Activated CD4-positive, alpha-beta memory T cell treated with anti-CD3 and anti-CD28 coated beads for 36 hours (primary cell): ENCODE measurements at regions of chr16 and their contacts with region 1.

Region 1: GRCh38 chr16:25014500-25015147 is 545 bp downstream of the ARHGAP17 start:
- DNase-seq: peak; percentile 37
- H3K4me3 Mint-ChIP-seq: peak overlapping the region; percentile 95
- H3K27ac Mint-ChIP-seq: peak overlapping the region; percentile 90
- H3K4me1 Mint-ChIP-seq: peaks cover 73% of the 10 kb centered on the region
- H3K27me3 Mint-ChIP-seq: no peaks in the 10 kb centered on the region

Region 2: GRCh38 chr16:24668481-24669061 is 346.1 kb before region 1 on chr16:
- CTCF ChIA-PET with region 1: no interaction called
- POLR2A ChIA-PET with region 1: no interaction called
- intact Hi-C with region 1: loop called (anchors 10 kb)
- DNase-seq: peak; percentile 78
- H3K4me3 Mint-ChIP-seq: peak overlapping the region; percentile 64
- H3K27ac Mint-ChIP-seq: peak overlapping the region; percentile 90
- H3K4me1 Mint-ChIP-seq: peaks cover 51% of the 10 kb centered on the region
- H3K27me3 Mint-ChIP-seq: peaks cover 8% of the 10 kb centered on the region

Region 3: GRCh38 chr16:24729362-24729984 is 285.2 kb before region 1 on chr16 and contains the start of gene TNRC6A:
- CTCF ChIA-PET with region 1: no interaction called
- POLR2A ChIA-PET with region 1: no interaction called
- intact Hi-C with region 1: loop called (anchors 10 kb)
- DNase-seq: peak; percentile 88
- H3K4me3 Mint-ChIP-seq: peak within 1 kb of the TSS; percentile 98
- H3K27ac Mint-ChIP-seq: peak within 1 kb of the TSS; percentile 98
- H3K4me1 Mint-ChIP-seq: peaks cover 49% of the 10 kb centered on the region
- H3K27me3 Mint-ChIP-seq: no peaks in the 10 kb centered on the region
- total RNA-seq, gene TNRC6A: 31.7 to 36.3 TPM

Region 4: DNA sequence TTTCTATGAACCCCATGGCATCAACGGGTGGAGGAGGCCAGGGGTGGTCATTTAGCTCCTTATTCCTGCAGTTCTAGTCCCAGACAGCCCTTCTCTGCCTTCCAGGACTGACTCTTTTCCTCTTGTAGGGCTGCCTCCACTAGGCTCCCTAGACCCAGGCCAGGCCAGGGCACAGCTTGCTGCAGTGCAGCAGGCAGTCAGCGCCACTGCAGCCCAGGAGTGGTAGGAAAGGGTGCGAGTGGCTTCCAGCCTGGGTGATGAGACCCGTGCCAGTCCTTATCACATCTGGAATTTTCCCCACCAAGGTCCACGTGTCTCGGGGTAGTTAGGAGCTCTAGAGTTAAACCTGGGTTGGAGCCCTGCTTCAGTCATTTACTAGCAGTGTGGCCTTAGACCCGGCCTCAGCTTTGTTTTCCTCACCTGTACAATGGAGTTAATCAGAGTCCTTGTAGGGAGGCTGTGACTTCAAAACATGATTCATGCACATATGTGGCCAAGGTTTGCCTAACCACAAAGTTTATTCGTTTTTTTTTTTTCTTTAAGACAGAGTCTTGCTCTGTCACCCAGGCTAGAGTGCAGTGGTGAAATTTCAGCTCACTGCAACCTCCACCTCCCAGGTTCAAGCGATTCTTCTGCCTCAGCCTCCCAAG is 164.2 kb before region 1 on chr16:
- CTCF ChIA-PET with region 1: no interaction called
- POLR2A ChIA-PET with region 1: no interaction called
- intact Hi-C with region 1: loop called (anchors 2 kb)
- DNase-seq: peak; percentile 53
- H3K4me3 Mint-ChIP-seq: no peak overlapping the region
- H3K27ac Mint-ChIP-seq: no peak overlapping the region
- H3K4me1 Mint-ChIP-seq: peaks cover 21% of the 10 kb centered on the region
- H3K27me3 Mint-ChIP-seq: no peaks in the 10 kb centered on the region

Region 5: GRCh38 chr16:24980077-24980793 is 34.4 kb before region 1 on chr16:
- CTCF ChIA-PET with region 1: no interaction called
- POLR2A ChIA-PET with region 1: no interaction called
- intact Hi-C with region 1: loop called (anchors 5 kb)
- DNase-seq: peak; percentile 67
- H3K4me3 Mint-ChIP-seq: no peak overlapping the region
- H3K27ac Mint-ChIP-seq: peak overlapping the region; percentile 60
- H3K4me1 Mint-ChIP-seq: peaks cover 44% of the 10 kb centered on the region
- H3K27me3 Mint-ChIP-seq: no peaks in the 10 kb centered on the region

Region 6: DNA sequence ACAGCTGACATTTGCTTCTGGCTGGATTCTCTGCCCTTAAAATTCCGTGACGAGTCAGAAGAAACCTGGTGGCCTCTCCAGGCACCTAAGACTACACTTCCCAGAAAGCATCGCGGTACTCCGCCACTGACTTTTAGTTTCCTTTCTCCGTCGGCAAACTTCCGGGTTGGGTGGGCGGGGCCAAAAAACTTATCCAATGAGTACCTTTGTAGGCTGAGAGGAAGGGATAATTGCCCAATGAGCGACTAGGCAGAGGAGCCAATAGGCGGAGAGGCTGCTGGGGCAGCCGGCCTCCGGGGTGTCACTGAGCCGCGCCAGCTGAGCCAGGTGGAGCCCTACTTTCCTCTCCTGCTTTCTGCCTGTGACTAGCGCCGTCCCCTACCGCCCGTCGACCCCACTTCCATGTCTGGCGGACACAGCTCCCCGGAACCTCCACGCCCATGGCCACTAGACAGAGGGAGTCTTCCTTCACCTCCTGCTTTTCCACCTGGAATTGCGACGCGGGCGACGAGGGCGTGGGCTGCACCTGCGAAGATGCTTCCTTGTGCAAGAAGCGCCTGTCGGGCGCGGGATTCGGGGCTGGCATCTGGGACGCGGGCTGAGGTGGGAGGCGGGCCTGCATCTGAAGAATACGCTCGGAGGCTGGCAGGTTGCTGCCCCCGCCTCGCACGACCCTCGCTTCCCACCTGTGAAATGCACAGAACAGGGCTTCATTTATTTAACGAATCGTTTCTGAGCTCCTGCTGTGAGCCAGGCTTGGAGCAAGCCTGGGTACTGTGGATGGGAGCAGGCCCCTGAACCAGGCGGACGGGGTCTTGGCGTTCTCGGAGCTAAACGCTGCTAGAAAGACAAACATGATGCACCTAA is 17.1 kb after region 1 on chr16:
- CTCF ChIA-PET with region 1: interaction called, 3 read pairs
- POLR2A ChIA-PET with region 1: interaction called, 19 read pairs
- intact Hi-C with region 1: loop called (anchors 1 kb)
- DNase-seq: peak; percentile 94
- H3K4me3 Mint-ChIP-seq: peak overlapping the region; percentile 92
- H3K27ac Mint-ChIP-seq: peak overlapping the region; percentile 91
- H3K4me1 Mint-ChIP-seq: peaks cover 34% of the 10 kb centered on the region
- H3K27me3 Mint-ChIP-seq: no peaks in the 10 kb centered on the region

Region 7: DNA sequence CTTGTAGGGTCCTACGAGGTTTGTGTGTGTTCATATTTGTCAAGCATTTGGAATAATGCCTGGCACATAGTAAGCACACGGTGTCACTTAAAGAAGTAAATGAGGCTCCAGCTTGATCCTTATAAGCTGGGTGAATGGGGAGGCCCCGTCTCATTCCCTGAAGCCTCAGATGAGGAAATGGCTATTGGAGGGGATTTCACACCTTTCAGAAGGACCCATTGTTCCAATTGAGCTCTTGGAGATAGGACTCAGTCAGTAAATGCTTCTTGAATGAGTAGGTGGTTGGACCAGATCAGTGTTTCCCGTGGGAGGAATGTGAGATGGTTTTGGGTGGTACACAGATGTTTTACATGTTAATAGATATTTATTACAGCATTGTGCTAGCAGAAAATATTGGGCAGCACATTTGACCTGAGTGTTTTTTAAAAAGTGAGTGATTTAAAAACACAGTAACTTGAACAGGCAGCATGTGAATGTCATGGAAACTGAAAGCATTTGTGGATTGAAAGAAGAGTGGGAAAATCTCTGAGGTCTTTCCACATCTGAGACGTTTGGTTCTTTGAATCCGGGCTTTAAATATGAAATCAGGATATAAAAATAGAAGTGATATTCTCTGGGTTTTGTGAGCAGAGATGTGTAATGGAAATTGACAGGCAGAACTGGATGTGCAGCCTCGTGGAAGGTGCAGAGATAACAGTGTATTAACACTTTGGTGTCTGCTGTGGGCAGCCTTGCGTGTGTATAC is 37.0 kb after region 1 on chr16:
- CTCF ChIA-PET with region 1: interaction called, 4 read pairs
- POLR2A ChIA-PET with region 1: interaction called, 3 read pairs
- intact Hi-C with region 1: loop called (anchors 1 kb)
- DNase-seq: no peak
- H3K4me3 Mint-ChIP-seq: peak overlapping the region; percentile 54
- H3K27ac Mint-ChIP-seq: peak overlapping the region; percentile 74
- H3K4me1 Mint-ChIP-seq: peaks cover 47% of the 10 kb centered on the region
- H3K27me3 Mint-ChIP-seq: no peaks in the 10 kb centered on the region

Region 8: GRCh38 chr16:25291580-25291979 is 277.0 kb after region 1 on chr16:
- CTCF ChIA-PET with region 1: no interaction called
- POLR2A ChIA-PET with region 1: no interaction called
- intact Hi-C with region 1: no loop called
- DNase-seq: no peak
- H3K4me3 Mint-ChIP-seq: no peak overlapping the region
- H3K27ac Mint-ChIP-seq: no peak overlapping the region
- H3K4me1 Mint-ChIP-seq: no peaks in the 10 kb centered on the region
- H3K27me3 Mint-ChIP-seq: no peaks in the 10 kb centered on the region